Naive thymus-derived CD8-positive, alpha-beta T cell (primary cell): ENCODE measurements at regions of chr7 and their contacts with region 1.

Region 1: GRCh38 chr7:135170274-135170997 is at the start of gene CYREN:
- DNase-seq: peak; percentile 78 to 93 (median 84)
- ATAC-seq: peak; percentile 77 to 79
- H3K4me3 Mint-ChIP-seq: peak within 1 kb of the TSS; percentile 85 to 94 (median 90)
- H3K27ac Mint-ChIP-seq: peak within 1 kb of the TSS; percentile 93 to 98 (median 96)
- H3K4me1 Mint-ChIP-seq: peaks cover 26 to 59% (median 55%) of the 10 kb centered on the region in 4 donors
- H3K27me3 Mint-ChIP-seq: no peaks in the 10 kb centered on the region
- polyA plus RNA-seq, gene CYREN: 55.5 to 70.1 (median 59.5) TPM

Region 2: GRCh38 chr7:134986363-134987251 is 183.8 kb before region 1 on chr7 and contains the start of gene AGBL3:
- POLR2A ChIA-PET with region 1: interaction called, 66 read pairs
- DNase-seq: peak; percentile 74 to 97 (median 90)
- ATAC-seq: peak; percentile 88 to 90
- H3K4me3 Mint-ChIP-seq: peak within 1 kb of the TSS; percentile 93 to 100 (median 98)
- H3K27ac Mint-ChIP-seq: peak within 1 kb of the TSS; percentile 95 to 100 (median 100)
- H3K4me1 Mint-ChIP-seq: peaks cover 26 to 55% (median 51%) of the 10 kb centered on the region in 4 donors
- H3K27me3 Mint-ChIP-seq: no peaks in the 10 kb centered on the region
- polyA plus RNA-seq, gene AGBL3: 1.8 to 4.0 (median 3.2) TPM

Region 3: GRCh38 chr7:134992626-134993179 is 177.7 kb before region 1 on chr7:
- POLR2A ChIA-PET with region 1: interaction called, 66 read pairs
- DNase-seq: peak in 7 of 10 donors; percentile 31 to 68 (median 50)
- ATAC-seq: peak; percentile 52 to 54
- H3K4me3 Mint-ChIP-seq: peak overlapping the region; percentile 41 to 80 (median 76)
- H3K27ac Mint-ChIP-seq: peak overlapping the region; percentile 91 to 99 (median 98)
- H3K4me1 Mint-ChIP-seq: peaks cover 41 to 93% (median 84%) of the 10 kb centered on the region in 4 donors
- H3K27me3 Mint-ChIP-seq: no peaks in the 10 kb centered on the region

Region 4: DNA sequence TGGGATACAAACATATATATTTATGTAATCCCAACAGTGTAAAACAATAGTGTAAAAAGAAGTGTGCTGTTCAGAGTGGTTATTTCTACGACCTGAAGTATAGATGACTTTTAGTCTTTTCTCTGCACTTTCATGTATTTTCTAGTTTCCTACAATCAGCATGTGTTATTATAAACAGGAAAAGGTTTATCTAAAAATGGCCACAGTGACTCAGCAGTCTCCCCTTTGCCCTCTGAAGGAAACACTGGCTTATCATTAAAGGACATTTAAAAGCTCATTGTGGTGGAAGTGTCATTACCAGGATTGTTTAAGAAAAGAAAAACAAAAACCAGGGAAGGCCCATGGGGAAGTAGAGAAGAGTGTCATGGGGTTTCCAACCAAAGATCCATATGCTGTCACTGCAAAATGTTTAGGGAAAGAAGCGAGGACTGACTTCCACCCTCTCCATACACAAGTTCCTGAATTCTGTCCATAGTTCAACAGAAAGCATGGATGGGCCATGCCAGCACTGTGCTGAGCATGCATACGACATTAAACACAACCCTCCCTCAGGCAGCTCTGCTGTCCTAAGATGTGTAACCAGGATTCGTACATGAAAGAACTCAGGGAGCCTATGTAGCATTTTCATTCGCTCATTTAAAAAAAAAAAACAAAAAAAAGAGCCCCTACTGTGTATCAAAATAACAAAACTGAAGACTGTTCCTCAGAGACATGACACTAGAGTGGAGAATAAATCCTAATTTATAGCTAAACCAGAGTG is 10.2 kb before region 1 on chr7:
- POLR2A ChIA-PET with region 1: interaction called, 16 read pairs
- DNase-seq: no peak
- ATAC-seq: peak in 1 of 2 donors; percentile 20
- H3K4me3 Mint-ChIP-seq: peak overlapping the region in 6 of 10 donors; percentile 7 to 62 (median 32)
- H3K27ac Mint-ChIP-seq: peak overlapping the region; percentile 6 to 87 (median 74)
- H3K4me1 Mint-ChIP-seq: peaks cover 33 to 76% (median 71%) of the 10 kb centered on the region in 4 donors
- H3K27me3 Mint-ChIP-seq: no peaks in the 10 kb centered on the region

Region 5: GRCh38 chr7:135238112-135238744 is 67.8 kb after region 1 on chr7:
- POLR2A ChIA-PET with region 1: no interaction called
- DNase-seq: no peak
- ATAC-seq: no peak
- H3K4me3 Mint-ChIP-seq: no peak overlapping the region
- H3K27ac Mint-ChIP-seq: no peak overlapping the region
- H3K4me1 Mint-ChIP-seq: peaks cover 0 to 21% (median 6%) of the 10 kb centered on the region in 4 donors
- H3K27me3 Mint-ChIP-seq: peaks cover 0 to 12% (median 6%) of the 10 kb centered on the region in 5 donors